Esophagus squamous epithelium (tissue), 5 donors: ENCODE measurements at regions of chr4 and their contacts with region 1.

Region 1: DNA sequence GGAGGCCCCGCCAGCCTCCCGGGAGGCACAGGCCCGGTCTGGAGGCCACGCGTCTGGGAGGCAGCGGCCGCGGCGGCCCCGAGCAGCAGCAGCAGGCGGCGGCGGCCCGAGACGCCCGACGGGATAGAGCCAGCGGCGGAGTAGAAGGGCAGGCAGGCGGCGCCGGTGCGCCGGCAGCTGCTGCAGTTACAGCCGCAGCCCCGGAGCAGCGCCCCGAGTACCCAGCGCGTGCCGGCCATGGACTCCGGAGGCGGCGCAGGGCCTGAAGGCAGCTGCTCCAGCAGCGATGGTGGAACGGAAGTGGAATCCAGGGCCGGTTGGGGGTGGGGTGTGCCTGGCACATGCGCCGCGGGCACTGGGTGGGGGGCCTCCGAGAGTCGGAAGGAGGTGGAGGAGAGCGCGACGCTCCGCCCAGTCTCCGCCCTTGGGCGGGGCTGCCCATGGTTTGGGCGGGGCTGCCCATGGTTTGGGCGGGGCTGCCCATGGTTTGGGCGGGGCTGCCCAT is at the start of gene GRSF1:
- DNase-seq: peak; percentile 73
- H3K4me3 ChIP-seq: peak within 1 kb of the TSS; percentile 76 to 100 (median 87)
- H3K27ac ChIP-seq: peak within 1 kb of the TSS; percentile 91 to 99 (median 94)
- H3K4me1 ChIP-seq: peaks cover 0 to 53% (median 15%) of the 10 kb centered on the region in 3 donors
- H3K27me3 ChIP-seq: no peaks in the 10 kb centered on the region
- CTCF ChIP-seq: peak in 2 of 6 experiments; percentile 14 to 29
- POLR2A ChIP-seq: peak in 2 of 4 donors; percentile 60 to 79
- total RNA-seq, gene GRSF1: 33.4 to 59.5 (median 54.0) TPM

Region 2: DNA sequence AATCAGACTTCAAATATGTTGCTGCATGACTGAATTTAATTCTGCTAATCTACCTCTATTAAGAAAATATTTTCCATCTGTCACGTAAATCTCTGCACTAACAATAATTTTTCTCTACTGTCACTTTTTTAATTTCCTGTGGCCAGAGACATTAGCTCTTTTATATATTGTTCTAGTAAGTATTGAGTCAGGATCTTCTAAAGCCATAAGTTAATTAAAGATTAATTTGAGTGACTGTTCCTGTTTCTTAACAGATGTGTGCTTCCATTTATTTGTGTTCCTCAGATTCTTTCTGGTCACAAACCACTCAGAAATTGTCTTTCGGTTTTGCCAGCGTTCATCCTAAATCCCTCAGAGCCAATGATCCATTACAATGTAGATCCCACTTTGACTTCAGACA is 459.1 kb before region 1 on chr4:
- intact Hi-C with region 1: no loop called
- DNase-seq: no peak
- H3K4me3 ChIP-seq: no peak overlapping the region
- H3K27ac ChIP-seq: no peak overlapping the region
- H3K4me1 ChIP-seq: no peaks in the 10 kb centered on the region
- H3K27me3 ChIP-seq: no peaks in the 10 kb centered on the region
- CTCF ChIP-seq: no peak
- POLR2A ChIP-seq: no peak

Region 3: DNA sequence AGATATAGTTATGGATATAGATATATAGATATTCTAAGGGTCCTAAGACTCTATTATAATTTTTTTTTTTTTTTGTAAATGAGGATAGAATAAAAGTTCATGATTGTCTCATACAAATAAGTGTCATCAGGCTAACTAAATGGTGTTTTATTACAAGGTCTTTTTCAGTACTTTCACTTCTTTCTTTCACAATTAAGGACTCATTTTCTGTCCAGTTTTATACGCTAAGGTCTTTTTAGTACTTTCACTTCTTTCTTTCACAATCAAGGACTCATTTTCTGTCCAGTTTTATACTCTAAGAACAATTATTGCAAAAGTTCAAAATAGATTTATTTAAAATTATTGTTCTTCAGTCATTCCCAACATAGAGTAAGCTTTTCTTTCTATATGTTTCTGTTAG is 85.2 kb before region 1 on chr4:
- intact Hi-C with region 1: no loop called
- DNase-seq: no peak
- H3K4me3 ChIP-seq: no peak overlapping the region
- H3K27ac ChIP-seq: no peak overlapping the region
- H3K4me1 ChIP-seq: peaks cover 0 to 17% (median 0%) of the 10 kb centered on the region in 3 donors
- H3K27me3 ChIP-seq: no peaks in the 10 kb centered on the region
- CTCF ChIP-seq: no peak
- POLR2A ChIP-seq: no peak

Region 4: DNA sequence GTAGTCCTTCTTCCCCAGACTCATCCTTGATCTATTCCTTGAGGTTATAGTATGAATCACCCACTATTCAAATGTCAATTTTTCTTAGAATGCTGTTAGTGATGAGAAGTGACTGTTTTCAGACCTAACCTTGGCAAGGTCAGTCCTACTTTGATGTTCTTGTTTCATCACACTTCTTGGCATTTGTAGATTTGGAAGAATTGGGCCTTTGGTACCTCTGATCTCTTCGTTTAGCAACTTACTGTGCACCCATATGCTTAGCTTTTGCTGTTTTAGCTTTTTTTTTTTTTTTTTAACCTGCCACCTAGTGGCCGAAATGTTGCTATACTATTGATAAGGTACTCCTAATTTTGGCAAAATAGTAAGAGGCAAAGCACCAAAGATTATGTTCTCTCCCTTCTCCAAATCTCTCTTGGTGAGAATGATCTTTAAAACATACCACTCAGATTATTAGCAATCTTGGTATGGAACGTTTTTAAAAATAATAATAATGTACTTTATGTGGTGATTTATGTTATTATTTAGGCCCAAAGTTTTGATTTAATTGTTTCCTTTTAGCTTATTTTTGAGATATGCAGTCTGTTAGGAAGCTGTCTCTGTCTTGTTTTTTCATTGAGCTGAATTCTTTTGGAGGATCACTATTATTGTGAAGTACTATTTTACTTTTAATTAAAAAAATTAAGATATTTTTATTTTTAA is 170.4 kb after region 1 on chr4:
- intact Hi-C with region 1: loop called (anchors 10 kb)
- DNase-seq: no peak
- H3K4me3 ChIP-seq: no peak overlapping the region
- H3K27ac ChIP-seq: no peak overlapping the region
- H3K4me1 ChIP-seq: peaks cover 0 to 11% (median 0%) of the 10 kb centered on the region in 3 donors
- H3K27me3 ChIP-seq: no peaks in the 10 kb centered on the region
- CTCF ChIP-seq: peak; percentile 32 to 62 (median 52)
- POLR2A ChIP-seq: no peak